Mammary epithelial cell (primary cell): ENCODE measurements at regions of chr10 and their contacts with region 1.

Region 1: DNA sequence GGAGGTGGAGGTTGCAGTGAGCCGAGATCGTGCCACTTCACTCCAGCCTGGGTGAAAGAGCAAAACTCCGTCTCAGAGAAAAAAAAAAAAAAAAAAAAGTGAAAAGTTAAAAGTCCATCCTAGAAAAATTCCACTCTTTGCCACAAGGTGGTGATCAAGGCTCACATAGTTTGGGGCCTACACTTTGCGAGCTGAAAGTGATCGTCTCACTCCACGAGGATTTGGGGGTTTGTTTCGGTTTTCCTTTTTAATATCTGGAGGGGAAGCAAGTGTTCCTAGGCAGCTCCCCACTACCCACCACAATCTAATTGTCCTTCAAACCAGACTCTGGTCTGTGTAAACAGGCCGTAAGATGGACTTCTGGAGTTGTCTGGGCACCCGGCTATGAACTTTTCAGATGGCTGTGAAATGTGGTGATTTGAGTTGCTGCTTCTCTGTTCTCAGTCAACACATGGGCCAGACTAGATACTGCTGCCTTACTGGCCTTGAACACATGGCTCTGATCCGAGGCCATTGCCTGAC is 27.1 kb downstream of the PRLHR start:
- DNase-seq: peak; percentile 36
- H3K4me3 ChIP-seq: no peak overlapping the region
- H3K27ac ChIP-seq: no peak overlapping the region
- H3K4me1 ChIP-seq: no peaks in the 10 kb centered on the region
- H3K27me3 ChIP-seq: no peaks in the 10 kb centered on the region
- CTCF ChIP-seq: peak; percentile 51 to 71

Region 2: GRCh38 chr10:117496616-117497028 is 1071.8 kb before region 1 on chr10:
- CTCF ChIA-PET with region 1: interaction called, 3 read pairs
- dilution Hi-C with region 1: no loop called
- in situ Hi-C with region 1: loop called in 1 of 2 experiments (anchors 25 kb)
- intact Hi-C with region 1: loop called (anchors 1 kb)
- DNase-seq: peak; percentile 80
- H3K4me3 ChIP-seq: no peak overlapping the region
- H3K27ac ChIP-seq: no peak overlapping the region
- H3K4me1 ChIP-seq: peaks cover 5% of the 10 kb centered on the region
- H3K27me3 ChIP-seq: peaks cover 5% of the 10 kb centered on the region
- CTCF ChIP-seq: peak; percentile 94 to 97

Region 3: DNA sequence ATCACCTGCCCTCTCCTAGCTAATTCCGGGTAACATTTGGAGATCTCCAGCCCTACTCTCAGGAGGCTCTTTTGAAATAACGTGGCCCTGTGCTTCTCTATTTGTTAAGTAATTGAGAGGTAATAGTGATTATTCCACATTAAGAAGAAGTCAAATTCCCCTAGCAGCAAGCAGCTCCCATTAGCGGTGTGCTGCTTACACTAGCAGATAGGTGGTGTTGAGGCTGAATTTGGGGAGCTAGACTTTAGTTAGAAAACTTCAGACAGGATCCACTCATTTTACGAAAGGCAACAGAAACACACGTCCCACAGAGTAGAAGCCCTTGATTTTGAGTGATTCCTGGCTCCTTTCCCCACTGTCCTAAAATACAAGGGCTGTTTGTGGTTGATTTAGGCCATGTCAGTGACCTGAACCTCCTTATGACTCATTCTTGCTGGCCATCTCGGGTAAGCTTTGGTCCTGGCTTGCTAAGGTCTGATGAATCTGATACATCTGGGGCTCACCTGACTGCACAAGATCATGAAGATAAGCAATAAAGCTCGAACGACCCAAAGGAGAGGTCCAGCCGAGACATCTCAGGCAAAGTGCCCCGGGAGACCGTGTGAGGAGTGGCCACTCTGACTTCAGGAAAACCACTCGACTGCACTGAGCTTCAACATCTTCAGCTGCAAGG is 303.4 kb before region 1 on chr10:
- CTCF ChIA-PET with region 1: no interaction called
- dilution Hi-C with region 1: no loop called
- in situ Hi-C with region 1: no loop called
- intact Hi-C with region 1: loop called (anchors 5 kb)
- DNase-seq: no peak
- H3K4me3 ChIP-seq: no peak overlapping the region
- H3K27ac ChIP-seq: no peak overlapping the region
- H3K4me1 ChIP-seq: no peaks in the 10 kb centered on the region
- H3K27me3 ChIP-seq: no peaks in the 10 kb centered on the region
- CTCF ChIP-seq: no peak

Region 4: GRCh38 chr10:118621304-118621948 is 53.0 kb after region 1 on chr10:
- CTCF ChIA-PET with region 1: no interaction called
- dilution Hi-C with region 1: no loop called
- in situ Hi-C with region 1: no loop called
- intact Hi-C with region 1: no loop called
- DNase-seq: no peak
- H3K4me3 ChIP-seq: no peak overlapping the region
- H3K27ac ChIP-seq: no peak overlapping the region
- H3K4me1 ChIP-seq: no peaks in the 10 kb centered on the region
- H3K27me3 ChIP-seq: no peaks in the 10 kb centered on the region
- CTCF ChIP-seq: no peak

Region 5: DNA sequence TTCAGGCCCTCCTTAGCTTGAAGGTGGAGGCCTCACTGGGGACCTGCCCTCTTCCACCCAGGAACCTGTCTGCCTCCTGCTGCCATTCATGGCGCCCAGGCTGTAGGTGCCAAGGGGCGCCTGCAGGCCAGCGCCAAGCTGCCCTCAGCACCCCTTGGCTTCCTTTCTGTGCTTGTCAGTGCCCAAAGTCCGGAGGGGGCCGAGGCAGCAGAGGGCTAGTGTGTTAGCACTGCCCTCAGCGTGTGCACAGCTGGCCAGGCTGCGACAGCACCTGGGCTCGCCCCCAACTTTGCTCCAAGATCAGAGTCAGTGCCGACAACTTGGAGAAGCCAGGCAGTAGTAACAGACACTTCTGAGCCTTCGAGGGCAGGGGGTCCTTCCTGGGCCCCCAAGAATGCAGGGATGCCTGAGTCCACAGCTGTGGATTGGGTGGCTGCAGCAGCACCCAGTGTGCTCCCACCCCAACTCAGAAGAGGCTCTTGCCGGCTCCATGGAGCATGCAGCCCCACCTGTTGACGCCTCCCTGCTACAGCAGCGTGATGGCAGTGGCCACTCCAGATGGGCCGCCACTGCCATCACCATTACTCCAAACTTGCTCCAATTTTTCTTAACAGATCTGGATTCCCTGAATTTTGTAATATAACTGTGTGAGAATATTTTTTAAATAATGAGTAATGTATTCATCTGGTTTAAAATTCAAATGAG is 144.7 kb after region 1 on chr10:
- CTCF ChIA-PET with region 1: interaction called, 8 read pairs
- dilution Hi-C with region 1: no loop called
- in situ Hi-C with region 1: loop called in 1 of 2 experiments (anchors 10 kb)
- intact Hi-C with region 1: no loop called
- DNase-seq: no peak
- H3K4me3 ChIP-seq: no peak overlapping the region
- H3K27ac ChIP-seq: no peak overlapping the region
- H3K4me1 ChIP-seq: no peaks in the 10 kb centered on the region
- H3K27me3 ChIP-seq: no peaks in the 10 kb centered on the region
- CTCF ChIP-seq: no peak

Region 6: DNA sequence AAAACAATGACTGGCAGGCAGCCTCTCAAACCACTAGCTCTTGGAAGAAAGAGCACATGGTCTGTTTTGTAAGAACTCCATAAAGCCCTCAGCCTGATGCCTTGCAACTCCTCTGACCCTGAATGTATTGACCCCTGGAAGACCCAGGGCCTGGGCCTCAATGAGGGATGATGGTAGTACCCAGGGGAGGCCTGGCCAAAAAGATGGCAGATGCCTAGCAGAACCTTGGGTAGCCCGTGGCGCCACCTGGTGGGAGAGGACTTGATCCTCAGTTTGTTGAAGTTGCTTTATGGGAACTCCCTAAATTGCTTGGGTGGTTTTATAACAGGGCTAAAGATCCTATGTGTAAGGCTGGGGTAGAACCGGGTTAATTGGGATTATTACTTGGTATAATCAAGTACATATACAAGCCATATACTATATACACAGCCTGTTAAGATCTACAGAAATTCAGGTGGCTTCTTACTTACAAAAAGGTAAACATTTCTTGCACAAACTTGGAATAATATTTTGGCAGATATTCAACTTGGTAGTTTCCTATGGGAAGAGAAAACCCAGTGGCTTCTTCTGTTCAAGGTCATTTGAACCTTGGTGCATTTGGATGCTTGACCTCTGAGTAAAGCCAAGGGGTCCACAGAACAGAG is 282.2 kb after region 1 on chr10:
- CTCF ChIA-PET with region 1: no interaction called
- dilution Hi-C with region 1: no loop called
- in situ Hi-C with region 1: no loop called
- intact Hi-C with region 1: loop called (anchors 1 kb)
- DNase-seq: peak; percentile 60
- H3K4me3 ChIP-seq: no peak overlapping the region
- H3K27ac ChIP-seq: no peak overlapping the region
- H3K4me1 ChIP-seq: peaks cover 25% of the 10 kb centered on the region
- H3K27me3 ChIP-seq: no peaks in the 10 kb centered on the region
- CTCF ChIP-seq: peak; percentile 69 to 90

Region 7: GRCh38 chr10:119199231-119199992 is 631.0 kb after region 1 on chr10:
- CTCF ChIA-PET with region 1: no interaction called
- dilution Hi-C with region 1: no loop called
- in situ Hi-C with region 1: no loop called
- intact Hi-C with region 1: loop called (anchors 5 kb)
- DNase-seq: peak; percentile 58
- H3K4me3 ChIP-seq: no peak overlapping the region
- H3K27ac ChIP-seq: no peak overlapping the region
- H3K4me1 ChIP-seq: peaks cover 40% of the 10 kb centered on the region
- H3K27me3 ChIP-seq: no peaks in the 10 kb centered on the region
- CTCF ChIP-seq: peak; percentile 77 to 82